ENCODE measurements at regions of chr11 and their contacts with region 1.

Region 1: DNA sequence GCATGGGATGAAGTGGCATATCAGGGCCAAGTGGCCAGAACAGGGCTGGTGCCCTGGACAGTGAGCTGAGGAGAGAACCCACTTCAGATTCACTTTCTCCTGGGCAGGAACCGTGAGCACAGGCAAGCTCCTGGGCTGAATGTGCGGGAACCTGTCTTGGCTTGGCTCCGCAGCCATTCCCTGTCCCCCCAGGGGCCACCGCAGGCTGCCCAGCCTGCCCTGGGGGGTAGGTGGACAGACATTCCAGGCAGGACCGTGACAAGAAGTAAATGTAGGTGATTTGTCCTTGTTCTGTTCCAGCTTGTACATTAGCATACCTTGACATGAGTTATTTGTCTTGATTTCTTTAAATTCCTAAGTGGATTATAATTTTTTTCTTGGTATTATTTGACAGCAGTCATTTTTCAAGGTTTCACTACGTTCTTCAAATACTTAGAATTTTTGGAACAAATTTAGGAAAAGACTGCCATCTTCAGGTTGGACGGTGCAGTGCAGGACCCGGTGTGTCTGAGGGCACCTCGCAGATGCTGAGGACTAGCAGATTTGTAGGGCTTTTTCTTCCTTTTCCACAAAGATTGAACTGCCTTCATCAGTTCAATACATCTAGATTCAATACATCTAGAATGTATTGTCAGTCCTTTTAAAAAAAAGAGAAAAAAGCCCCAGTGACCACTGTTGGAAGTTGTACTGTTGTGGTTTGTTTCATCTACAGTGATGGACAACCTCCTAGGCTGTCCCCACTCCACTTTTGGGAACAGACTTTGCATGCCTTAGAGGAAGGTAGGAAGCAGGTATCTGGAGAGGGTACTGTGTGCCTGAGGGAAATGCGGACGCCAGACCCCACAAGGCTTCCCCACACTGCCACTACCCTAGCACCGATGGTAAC is 115.1 kb upstream of the RASSF10 start:
- DNase-seq: peak; percentile 74
- H3K4me3 Mint-ChIP-seq: no peak overlapping the region
- H3K27ac Mint-ChIP-seq: no peak overlapping the region
- H3K4me1 Mint-ChIP-seq: no peaks in the 10 kb centered on the region
- H3K27me3 Mint-ChIP-seq: no peaks in the 10 kb centered on the region
- CTCF ChIP-seq: peak; percentile 76

Region 2: GRCh38 chr11:12288212-12288930 is 605.7 kb before region 1 on chr11:
- CTCF ChIA-PET with region 1: interaction called, 9 read pairs
- intact Hi-C with region 1: loop called (anchors 2 kb)
- DNase-seq: peak; percentile 88
- H3K4me3 Mint-ChIP-seq: peak overlapping the region; percentile 29
- H3K27ac Mint-ChIP-seq: peak overlapping the region; percentile 85
- H3K4me1 Mint-ChIP-seq: peaks cover 42% of the 10 kb centered on the region
- H3K27me3 Mint-ChIP-seq: no peaks in the 10 kb centered on the region
- CTCF ChIP-seq: peak; percentile 92

Region 3: DNA sequence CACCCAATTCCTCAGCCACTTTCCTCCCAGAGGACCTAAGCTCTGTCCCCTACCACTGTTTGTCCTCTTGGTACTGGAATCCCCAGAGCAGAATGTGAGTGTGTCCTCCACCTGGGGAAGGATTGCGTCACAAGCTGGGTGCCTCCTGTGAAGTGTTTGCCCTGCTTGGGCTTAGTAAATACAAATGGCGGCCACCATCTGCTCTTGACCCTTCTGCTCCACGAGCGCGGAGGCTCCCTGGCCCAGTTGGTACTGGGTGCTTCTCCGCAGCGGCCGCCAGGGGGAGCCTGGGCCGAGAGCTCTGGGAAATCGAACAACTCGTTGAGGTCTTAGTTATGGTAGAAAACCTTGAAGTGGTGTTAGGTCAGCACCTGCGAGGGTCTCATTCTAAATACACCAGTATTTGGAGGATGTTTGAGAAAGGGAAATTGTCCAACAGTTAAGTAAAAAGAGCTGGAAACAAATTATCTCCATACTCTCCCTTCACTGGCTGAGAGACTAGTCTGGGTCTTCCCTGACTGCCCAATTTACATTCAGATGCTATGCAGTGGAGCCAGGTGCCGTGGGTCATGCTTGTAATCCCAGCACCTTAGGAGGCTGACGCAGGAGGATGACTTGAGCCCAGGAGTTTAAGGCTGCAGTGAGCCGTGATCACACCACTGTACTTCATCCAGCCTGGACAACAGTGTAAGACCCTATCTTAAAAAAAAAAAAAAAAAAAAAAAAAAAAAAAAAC is 294.5 kb before region 1 on chr11:
- CTCF ChIA-PET with region 1: interaction called, 7 read pairs
- intact Hi-C with region 1: loop called (anchors 5 kb)
- DNase-seq: peak; percentile 78
- H3K4me3 Mint-ChIP-seq: no peak overlapping the region
- H3K27ac Mint-ChIP-seq: no peak overlapping the region
- H3K4me1 Mint-ChIP-seq: peaks cover 12% of the 10 kb centered on the region
- H3K27me3 Mint-ChIP-seq: no peaks in the 10 kb centered on the region
- CTCF ChIP-seq: peak; percentile 89

Region 4: GRCh38 chr11:13222285-13222684 is 328.3 kb after region 1 on chr11:
- CTCF ChIA-PET with region 1: no interaction called
- intact Hi-C with region 1: no loop called
- DNase-seq: no peak
- H3K4me3 Mint-ChIP-seq: no peak overlapping the region
- H3K27ac Mint-ChIP-seq: no peak overlapping the region
- H3K4me1 Mint-ChIP-seq: no peaks in the 10 kb centered on the region
- H3K27me3 Mint-ChIP-seq: no peaks in the 10 kb centered on the region
- CTCF ChIP-seq: no peak